PC-3 (cell line): ENCODE measurements at regions of chr15 and their contacts with region 1.

Region 1: GRCh38 chr15:59725172-59725486 is 36.0 kb upstream of the BNIP2 start:
- DNase-seq: no peak
- ATAC-seq: no peak
- H3K4me3 ChIP-seq: no peak overlapping the region
- H3K27ac ChIP-seq: no peak overlapping the region
- H3K4me1 ChIP-seq: no peaks in the 10 kb centered on the region
- H3K27me3 ChIP-seq: peaks cover 77% of the 10 kb centered on the region
- CTCF ChIP-seq: no peak

Region 2: GRCh38 chr15:59420986-59421618 is 304.0 kb before region 1 on chr15:
- CTCF ChIA-PET with region 1: no interaction called
- POLR2A ChIA-PET with region 1: no interaction called
- intact Hi-C with region 1: no loop called
- DNase-seq: peak; percentile 6
- ATAC-seq: no peak
- H3K4me3 ChIP-seq: no peak overlapping the region
- H3K27ac ChIP-seq: no peak overlapping the region
- H3K4me1 ChIP-seq: no peaks in the 10 kb centered on the region
- H3K27me3 ChIP-seq: no peaks in the 10 kb centered on the region
- CTCF ChIP-seq: no peak

Region 3: GRCh38 chr15:59689626-59690236 is 35.4 kb before region 1 on chr15:
- CTCF ChIA-PET with region 1: no interaction called
- POLR2A ChIA-PET with region 1: no interaction called
- intact Hi-C with region 1: loop called (anchors 2 kb)
- DNase-seq: peak; percentile 52
- ATAC-seq: peak; percentile 63
- H3K4me3 ChIP-seq: peak overlapping the region; percentile 98
- H3K27ac ChIP-seq: no peak overlapping the region
- H3K4me1 ChIP-seq: peaks cover 19% of the 10 kb centered on the region
- H3K27me3 ChIP-seq: no peaks in the 10 kb centered on the region
- CTCF ChIP-seq: no peak

Region 4: DNA sequence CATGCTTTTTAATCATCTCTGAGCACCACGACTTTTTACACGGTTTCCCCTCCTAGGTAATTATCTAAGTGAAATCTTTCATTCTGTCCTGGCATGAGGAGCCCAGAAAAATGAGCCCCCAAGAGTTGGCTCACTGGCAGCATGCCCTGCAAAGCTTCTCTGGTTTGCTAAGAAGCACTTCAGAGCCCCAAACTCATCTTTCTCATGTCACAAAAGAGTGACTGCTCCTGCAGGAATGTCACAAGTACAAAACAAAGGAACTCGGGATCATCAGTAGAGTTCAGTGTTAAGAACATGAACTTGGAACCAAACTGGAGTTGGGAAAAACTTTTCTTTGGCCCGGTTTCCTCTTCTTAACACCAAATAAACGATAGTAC is 402.9 kb after region 1 on chr15:
- CTCF ChIA-PET with region 1: no interaction called
- POLR2A ChIA-PET with region 1: no interaction called
- intact Hi-C with region 1: loop called (anchors 1 kb)
- DNase-seq: peak; percentile 10
- ATAC-seq: peak; percentile 54
- H3K4me3 ChIP-seq: peak overlapping the region; percentile 73
- H3K27ac ChIP-seq: no peak overlapping the region
- H3K4me1 ChIP-seq: no peaks in the 10 kb centered on the region
- H3K27me3 ChIP-seq: 0 out of 2 replicates have a peak, but pooled peaks cover 4% of the 10 kb centered on the region
- CTCF ChIP-seq: no peak

Region 5: DNA sequence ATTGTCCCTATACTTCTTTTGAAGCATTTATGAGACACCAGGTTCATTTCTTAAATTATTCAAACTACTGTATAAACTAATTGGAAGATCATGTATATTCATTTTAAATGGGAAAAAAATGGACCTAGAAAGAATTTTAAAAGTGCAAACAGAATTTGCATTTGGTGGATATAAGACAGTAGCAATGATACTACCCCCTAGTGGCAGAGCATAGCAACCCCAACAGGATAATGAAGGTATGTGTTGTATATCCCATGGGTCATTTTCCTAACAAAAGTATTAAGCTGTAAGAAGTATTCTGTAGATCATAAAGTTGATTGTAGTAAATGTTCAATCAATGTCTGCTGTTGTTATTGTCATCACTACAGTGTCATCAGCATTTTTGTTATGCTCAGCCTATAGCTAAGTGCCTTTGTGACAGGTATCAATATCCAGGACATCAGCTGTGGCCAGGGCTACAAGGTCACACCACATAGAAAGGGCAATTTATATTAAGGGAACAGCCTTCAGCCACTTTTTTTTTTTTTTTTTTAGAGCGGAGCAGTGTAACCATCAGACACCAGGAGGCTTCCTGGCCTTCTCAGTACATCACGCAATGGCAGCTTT is 454.8 kb after region 1 on chr15:
- CTCF ChIA-PET with region 1: no interaction called
- POLR2A ChIA-PET with region 1: no interaction called
- intact Hi-C with region 1: loop called (anchors 5 kb)
- DNase-seq: peak; percentile 65
- ATAC-seq: peak; percentile 48; the same call in 1 of the 2 replicates
- H3K4me3 ChIP-seq: no peak overlapping the region
- H3K27ac ChIP-seq: no peak overlapping the region
- H3K4me1 ChIP-seq: no peaks in the 10 kb centered on the region
- H3K27me3 ChIP-seq: peaks cover 55% of the 10 kb centered on the region
- CTCF ChIP-seq: peak; percentile 83